Right lobe of liver (tissue), 6 donors: ENCODE measurements at regions of chr17 and their contacts with region 1.

Region 1: GRCh38 chr17:8745586-8746500 is 1.2 kb upstream of the CCDC42 start:
- DNase-seq: peak; percentile 75 to 83 (median 77)
- ATAC-seq: peak; percentile 81 to 91 (median 88)
- H3K4me3 ChIP-seq: peak overlapping the region; percentile 61 to 76 (median 69)
- H3K27ac ChIP-seq: peak overlapping the region; percentile 37 to 50 (median 41)
- H3K4me1 ChIP-seq: peaks cover 0 to 3% (median 0%) of the 10 kb centered on the region in 4 donors
- H3K27me3 ChIP-seq: no peaks in the 10 kb centered on the region
- CTCF ChIP-seq: peak; percentile 87 to 93 (median 90)
- POLR2A ChIP-seq: no peak

Region 2: DNA sequence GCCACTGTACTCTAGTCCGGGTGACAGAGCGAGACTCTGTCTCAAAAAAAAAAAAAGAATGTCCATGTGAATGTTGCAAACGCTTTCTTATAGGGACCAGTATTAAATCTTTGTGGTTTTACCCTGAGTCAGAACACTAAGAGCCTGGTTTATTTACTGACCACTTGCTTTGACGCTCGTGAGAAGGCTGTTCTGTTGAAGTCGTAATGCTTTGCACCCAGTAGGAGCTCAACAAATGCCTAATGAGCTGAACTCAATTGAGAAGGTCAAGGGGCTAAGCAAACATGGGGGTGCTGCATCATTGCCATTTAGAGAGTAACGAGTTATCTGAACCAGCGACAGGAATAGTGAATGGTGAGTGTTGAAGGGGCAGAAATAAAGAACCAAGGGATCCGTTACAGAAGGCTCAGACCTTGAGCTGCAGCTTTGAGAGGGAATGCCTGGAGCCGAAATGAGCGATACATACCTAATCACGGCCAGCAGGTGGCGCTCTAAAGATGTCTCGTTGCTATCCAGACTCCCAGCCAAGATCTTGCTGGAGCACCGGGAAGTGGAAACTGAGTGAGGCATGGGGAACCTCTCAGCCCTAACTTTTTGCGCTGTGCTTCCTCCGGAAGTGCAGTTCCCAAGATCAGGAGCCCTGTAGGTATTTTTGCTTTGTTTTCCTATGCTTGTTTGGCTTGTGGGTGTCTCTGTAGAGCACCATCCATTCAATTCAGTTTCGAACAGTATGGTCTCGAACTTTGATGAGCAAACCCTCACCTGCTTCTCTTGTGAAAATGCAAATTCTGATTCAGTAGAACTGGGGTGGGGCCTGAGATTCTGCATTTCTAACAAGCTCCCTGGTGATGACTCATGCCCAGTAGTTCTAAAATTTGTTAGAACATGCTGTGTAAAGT is 335.6 kb before region 1 on chr17:
- intact Hi-C with region 1: loop called in 1 of 2 experiments (anchors 10 kb)
- DNase-seq: peak; percentile 88 to 92 (median 90)
- ATAC-seq: peak; percentile 95 to 98 (median 97)
- H3K4me3 ChIP-seq: no peak overlapping the region
- H3K27ac ChIP-seq: no peak overlapping the region
- H3K4me1 ChIP-seq: peaks cover 0 to 15% (median 0%) of the 10 kb centered on the region in 4 donors
- H3K27me3 ChIP-seq: no peaks in the 10 kb centered on the region
- CTCF ChIP-seq: peak; percentile 86 to 92 (median 88)
- POLR2A ChIP-seq: no peak

Region 3: GRCh38 chr17:8470447-8471047 is 275.3 kb before region 1 on chr17:
- intact Hi-C with region 1: loop called in 1 of 2 experiments (anchors 10 kb)
- DNase-seq: peak; percentile 61 to 85 (median 83)
- ATAC-seq: peak; percentile 36 to 68 (median 49)
- H3K4me3 ChIP-seq: no peak overlapping the region
- H3K27ac ChIP-seq: peak overlapping the region in 2 of 3 donors; percentile 39 to 80
- H3K4me1 ChIP-seq: peaks cover 0 to 12% (median 5%) of the 10 kb centered on the region in 4 donors
- H3K27me3 ChIP-seq: no peaks in the 10 kb centered on the region
- CTCF ChIP-seq: no peak
- POLR2A ChIP-seq: no peak

Region 4: GRCh38 chr17:8563981-8564602 is 181.8 kb before region 1 on chr17:
- intact Hi-C with region 1: loop called in 1 of 2 experiments (anchors 10 kb)
- DNase-seq: no peak
- ATAC-seq: no peak
- H3K4me3 ChIP-seq: no peak overlapping the region
- H3K27ac ChIP-seq: no peak overlapping the region
- H3K4me1 ChIP-seq: no peaks in the 10 kb centered on the region
- H3K27me3 ChIP-seq: no peaks in the 10 kb centered on the region
- CTCF ChIP-seq: no peak
- POLR2A ChIP-seq: no peak

Region 5: DNA sequence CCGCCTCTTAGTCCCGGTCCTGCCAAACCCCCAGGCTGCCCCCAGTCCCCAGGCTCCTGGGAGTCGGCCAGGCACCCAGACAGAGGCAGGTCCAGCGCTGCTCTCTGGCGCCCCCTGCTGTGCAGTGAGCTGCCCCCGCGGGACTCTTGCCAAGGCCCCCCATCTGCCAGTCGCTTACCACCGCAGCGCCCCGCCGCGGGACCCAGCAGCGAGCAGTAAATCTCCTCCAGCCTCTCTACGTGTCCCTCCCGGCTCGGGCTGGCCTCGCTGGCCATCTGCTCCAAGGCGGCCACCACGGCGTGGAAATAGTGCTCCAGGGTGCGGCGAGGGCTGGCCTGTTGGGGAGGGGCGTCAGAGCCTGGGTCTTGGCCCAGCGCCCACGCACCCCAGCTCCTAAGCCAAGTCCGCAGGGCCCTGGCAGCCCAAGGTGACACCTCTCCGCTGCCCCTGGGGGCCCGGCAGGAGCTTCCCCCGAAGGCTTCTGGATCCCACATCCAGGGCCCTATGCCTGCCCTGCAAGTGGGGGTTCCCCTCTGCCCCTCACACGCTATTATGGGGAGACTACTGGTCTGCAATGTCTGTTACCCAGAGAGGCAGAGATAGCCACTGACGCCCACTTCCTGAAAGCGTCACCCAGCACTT is 87.0 kb after region 1 on chr17:
- intact Hi-C with region 1: no loop called
- DNase-seq: no peak
- ATAC-seq: no peak
- H3K4me3 ChIP-seq: no peak overlapping the region
- H3K27ac ChIP-seq: no peak overlapping the region
- H3K4me1 ChIP-seq: no peaks in the 10 kb centered on the region
- H3K27me3 ChIP-seq: no peaks in the 10 kb centered on the region
- CTCF ChIP-seq: peak in 1 of 4 donors; percentile 41
- POLR2A ChIP-seq: no peak

Region 6: GRCh38 chr17:8859027-8859803 is 113.4 kb after region 1 on chr17:
- intact Hi-C with region 1: no loop called
- DNase-seq: no peak
- ATAC-seq: peak in 1 of 4 donors; percentile 38
- H3K4me3 ChIP-seq: no peak overlapping the region
- H3K27ac ChIP-seq: no peak overlapping the region
- H3K4me1 ChIP-seq: no peaks in the 10 kb centered on the region
- H3K27me3 ChIP-seq: no peaks in the 10 kb centered on the region
- CTCF ChIP-seq: no peak
- POLR2A ChIP-seq: no peak